Posterior vena cava (tissue), 2 donors: ENCODE measurements at regions of chr12 and their contacts with region 1.

Region 1: DNA sequence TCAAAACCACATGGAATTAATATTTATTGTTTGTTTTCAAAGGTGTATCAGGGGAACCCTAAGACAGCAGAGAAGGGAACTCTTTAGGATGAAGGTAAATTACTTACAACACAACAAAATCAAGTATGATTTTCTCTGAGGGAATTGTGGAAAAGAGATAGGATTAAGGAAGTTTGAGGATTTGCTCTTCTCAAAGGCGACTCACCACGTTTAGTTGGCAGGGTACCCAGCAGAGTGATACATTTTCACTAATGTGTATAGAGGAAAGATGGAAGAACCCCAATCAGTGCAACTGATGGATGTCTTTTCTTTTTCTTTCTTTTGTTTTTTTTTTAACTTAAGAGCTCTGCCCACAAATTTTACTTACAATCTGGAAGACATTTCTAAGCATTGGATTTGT is 499.2 kb downstream of the CCER1 start:
- DNase-seq: no peak

Region 2: GRCh38 chr12:90441431-90441830 is 14.3 kb before region 1 on chr12:
- intact Hi-C with region 1: no loop called
- DNase-seq: no peak

Region 3: DNA sequence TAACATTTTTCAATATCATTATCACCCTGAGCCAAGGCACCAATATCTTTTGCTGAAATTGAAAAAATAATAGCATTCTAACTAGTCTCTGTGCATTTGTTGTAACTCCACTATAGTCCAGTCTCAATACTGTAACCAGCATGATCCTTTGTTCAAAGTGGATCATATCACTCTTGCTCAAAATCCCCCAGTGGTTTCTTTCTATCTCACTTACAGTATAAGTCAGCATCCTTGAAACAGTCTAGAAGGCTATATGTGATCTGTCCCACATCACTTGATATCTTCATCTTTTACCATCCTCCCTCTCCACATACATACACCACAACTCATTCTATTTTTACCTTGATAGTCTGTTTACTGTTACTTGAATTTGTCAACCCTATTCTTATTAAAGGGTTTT is 63.5 kb after region 1 on chr12:
- intact Hi-C with region 1: loop called in 1 of 2 experiments (anchors 2 kb)
- DNase-seq: no peak